ENCODE measurements at regions of chr9 and their contacts with region 1.

Region 1: DNA sequence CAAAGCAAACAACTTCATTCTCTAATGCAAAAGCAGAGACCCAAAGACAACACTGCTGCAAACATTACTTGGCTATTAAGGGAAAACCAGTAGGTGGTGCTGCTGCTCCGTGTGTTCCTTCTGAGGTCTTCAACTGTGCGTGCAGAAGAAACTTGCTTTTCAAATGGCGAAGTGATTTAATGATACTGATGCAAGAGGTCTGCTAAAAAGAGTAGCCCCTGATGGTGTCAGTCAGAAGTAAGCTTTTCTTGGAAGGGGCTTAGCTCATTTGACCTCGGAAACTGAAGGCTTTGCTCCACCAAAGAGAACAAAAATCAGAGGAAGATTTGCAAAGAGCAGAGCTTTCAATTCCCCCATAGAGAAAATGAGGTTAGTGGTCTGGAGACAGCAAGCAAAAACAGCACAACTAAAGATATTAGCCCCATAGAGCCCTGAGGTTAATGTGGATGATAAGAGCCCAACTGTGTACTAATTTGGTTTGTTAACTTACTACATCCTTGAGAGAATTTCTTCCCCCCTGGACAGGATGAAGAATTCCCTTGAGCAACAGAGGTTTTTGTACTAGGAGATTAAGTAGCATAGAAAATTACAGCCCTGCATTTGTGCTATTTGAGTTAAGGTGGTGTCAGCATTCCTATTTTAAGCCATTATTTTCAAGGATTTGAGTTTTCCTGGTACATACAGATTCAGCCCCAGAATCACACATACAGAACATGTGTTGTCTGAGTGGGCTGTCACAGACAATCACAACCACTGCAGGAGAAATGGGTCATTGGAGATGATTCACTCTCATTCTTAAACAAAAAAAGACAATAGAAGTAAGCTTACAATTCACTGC is 153.2 kb upstream of the C9orf72 start:
- DNase-seq: peak; percentile 80
- H3K4me3 Mint-ChIP-seq: no peak overlapping the region
- H3K27ac Mint-ChIP-seq: no peak overlapping the region
- H3K4me1 Mint-ChIP-seq: peaks cover 5% of the 10 kb centered on the region
- H3K27me3 Mint-ChIP-seq: peaks cover 59% of the 10 kb centered on the region
- CTCF ChIP-seq: peak; percentile 85

Region 2: GRCh38 chr9:27673641-27674040 is 52.8 kb before region 1 on chr9:
- CTCF ChIA-PET with region 1: no interaction called
- POLR2A ChIA-PET with region 1: no interaction called
- intact Hi-C with region 1: no loop called
- DNase-seq: no peak
- H3K4me3 Mint-ChIP-seq: no peak overlapping the region
- H3K27ac Mint-ChIP-seq: no peak overlapping the region
- H3K4me1 Mint-ChIP-seq: no peaks in the 10 kb centered on the region
- H3K27me3 Mint-ChIP-seq: peaks cover 13% of the 10 kb centered on the region
- CTCF ChIP-seq: no peak

Region 3: DNA sequence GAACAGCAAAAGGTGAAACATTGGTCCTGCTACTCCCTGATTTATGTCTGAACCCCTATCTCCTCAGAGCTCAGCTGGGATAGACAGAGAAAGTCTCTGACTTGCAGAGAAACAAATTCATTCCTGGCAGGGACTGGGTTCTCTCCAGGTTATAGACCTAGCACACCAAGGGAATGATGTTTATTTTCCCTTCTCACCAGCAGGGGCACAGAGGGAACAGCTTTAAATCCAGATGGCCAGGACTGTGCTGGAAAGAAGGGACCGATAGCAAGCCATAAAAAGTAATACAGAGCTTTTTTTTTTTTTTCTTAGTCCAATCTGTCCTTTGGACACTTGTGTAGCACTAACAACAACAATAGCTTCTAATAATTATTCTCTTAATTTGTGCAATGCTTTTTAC is 12.1 kb before region 1 on chr9:
- CTCF ChIA-PET with region 1: interaction called, 35 read pairs
- POLR2A ChIA-PET with region 1: no interaction called
- intact Hi-C with region 1: no loop called
- DNase-seq: peak; percentile 14
- H3K4me3 Mint-ChIP-seq: no peak overlapping the region
- H3K27ac Mint-ChIP-seq: no peak overlapping the region
- H3K4me1 Mint-ChIP-seq: no peaks in the 10 kb centered on the region
- H3K27me3 Mint-ChIP-seq: peaks cover 66% of the 10 kb centered on the region
- CTCF ChIP-seq: no peak

Region 4: GRCh38 chr9:28073270-28073669 is 346.8 kb after region 1 on chr9:
- CTCF ChIA-PET with region 1: interaction called, 179 read pairs
- POLR2A ChIA-PET with region 1: interaction called, 5 read pairs
- intact Hi-C with region 1: loop called (anchors 1 kb)
- DNase-seq: peak; percentile 65
- H3K4me3 Mint-ChIP-seq: no peak overlapping the region
- H3K27ac Mint-ChIP-seq: no peak overlapping the region
- H3K4me1 Mint-ChIP-seq: no peaks in the 10 kb centered on the region
- H3K27me3 Mint-ChIP-seq: peaks cover 17% of the 10 kb centered on the region
- CTCF ChIP-seq: peak; percentile 75

Region 5: DNA sequence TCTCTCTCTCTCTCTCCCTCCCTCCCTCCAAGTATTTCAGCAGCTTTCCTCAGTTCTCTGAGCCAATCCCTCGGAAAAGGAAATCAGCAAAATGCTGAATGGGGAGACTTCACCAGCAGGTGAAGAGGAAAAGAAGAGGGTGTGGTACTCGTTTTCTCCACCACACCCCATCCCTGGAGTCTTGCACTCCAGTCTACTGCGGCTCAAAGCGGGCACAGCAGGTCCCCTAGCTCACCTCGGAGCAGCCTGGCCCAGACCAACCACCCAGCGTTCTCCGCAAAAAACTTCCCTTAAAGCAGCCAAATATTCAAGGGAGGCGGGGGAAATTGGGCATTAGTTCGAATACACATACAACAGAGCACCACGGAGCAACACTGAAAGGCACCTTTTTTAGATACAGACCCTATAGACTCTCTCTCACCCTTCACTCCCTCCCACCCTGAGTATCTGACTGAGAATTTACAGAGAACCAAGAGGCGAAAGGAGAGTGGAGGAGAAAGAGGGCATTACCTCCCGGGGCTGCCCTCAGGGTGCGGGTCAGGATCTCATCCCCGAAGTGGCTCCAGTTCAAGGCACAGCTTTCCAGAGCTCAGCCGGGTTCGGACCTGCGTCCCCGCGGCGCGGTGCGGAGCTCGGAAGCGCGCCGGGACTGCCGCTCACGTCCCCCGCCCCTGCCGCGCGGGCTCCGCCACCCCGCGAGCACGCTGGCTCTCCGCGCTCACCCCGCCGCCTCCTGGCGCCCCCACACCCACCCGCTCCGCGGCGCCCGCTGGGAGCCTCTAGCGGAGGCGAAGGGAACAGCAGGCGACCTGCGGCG is 1485.3 kb after region 1 on chr9:
- CTCF ChIA-PET with region 1: interaction called, 11 read pairs
- POLR2A ChIA-PET with region 1: no interaction called
- intact Hi-C with region 1: loop called (anchors 2 kb)
- DNase-seq: peak; percentile 63
- H3K4me3 Mint-ChIP-seq: peak overlapping the region; percentile 86
- H3K27ac Mint-ChIP-seq: no peak overlapping the region
- H3K4me1 Mint-ChIP-seq: peaks cover 13% of the 10 kb centered on the region
- H3K27me3 Mint-ChIP-seq: no peaks in the 10 kb centered on the region
- CTCF ChIP-seq: peak; percentile 94